AG04450 (cell line): ENCODE measurements at regions of chr11 and their contacts with region 1.

Region 1: GRCh38 chr11:61429691-61430582 is at the starts of genes CPSF7 and SDHAF2:
- DNase-seq: peak; percentile 77
- H3K4me3 ChIP-seq: peak within 1 kb of the TSS; percentile 100
- H3K27ac ChIP-seq: peak within 1 kb of the TSS; percentile 96
- H3K27me3 ChIP-seq: no peaks in the 10 kb centered on the region
- CTCF ChIP-seq: no peak
- polyA plus RNA-seq, gene CPSF7: 37.3 and 40.3 TPM in 2 replicates
- polyA plus RNA-seq, gene SDHAF2: 71.6 and 86.5 TPM in 2 replicates

Region 2: GRCh38 chr11:61309739-61310138 is 120.2 kb before region 1 on chr11:
- CTCF ChIA-PET with region 1: no interaction called
- POLR2A ChIA-PET with region 1: no interaction called
- DNase-seq: no peak
- H3K4me3 ChIP-seq: no peak overlapping the region
- H3K27ac ChIP-seq: no peak overlapping the region
- H3K27me3 ChIP-seq: no peaks in the 10 kb centered on the region
- CTCF ChIP-seq: no peak

Region 3: GRCh38 chr11:61392981-61393595 is 36.8 kb before region 1 on chr11:
- CTCF ChIA-PET with region 1: interaction called, 3 read pairs
- POLR2A ChIA-PET with region 1: interaction called, 17 read pairs
- DNase-seq: no peak
- H3K4me3 ChIP-seq: peak overlapping the region; percentile 67
- H3K27ac ChIP-seq: no peak overlapping the region
- H3K27me3 ChIP-seq: no peaks in the 10 kb centered on the region
- CTCF ChIP-seq: peak; percentile 52

Region 4: GRCh38 chr11:61401558-61401957 is 28.4 kb before region 1 on chr11:
- CTCF ChIA-PET with region 1: interaction called, 10 read pairs
- POLR2A ChIA-PET with region 1: interaction called, 4 read pairs
- DNase-seq: no peak
- H3K4me3 ChIP-seq: no peak overlapping the region
- H3K27ac ChIP-seq: no peak overlapping the region
- H3K27me3 ChIP-seq: no peaks in the 10 kb centered on the region
- CTCF ChIP-seq: no peak

Region 5: DNA sequence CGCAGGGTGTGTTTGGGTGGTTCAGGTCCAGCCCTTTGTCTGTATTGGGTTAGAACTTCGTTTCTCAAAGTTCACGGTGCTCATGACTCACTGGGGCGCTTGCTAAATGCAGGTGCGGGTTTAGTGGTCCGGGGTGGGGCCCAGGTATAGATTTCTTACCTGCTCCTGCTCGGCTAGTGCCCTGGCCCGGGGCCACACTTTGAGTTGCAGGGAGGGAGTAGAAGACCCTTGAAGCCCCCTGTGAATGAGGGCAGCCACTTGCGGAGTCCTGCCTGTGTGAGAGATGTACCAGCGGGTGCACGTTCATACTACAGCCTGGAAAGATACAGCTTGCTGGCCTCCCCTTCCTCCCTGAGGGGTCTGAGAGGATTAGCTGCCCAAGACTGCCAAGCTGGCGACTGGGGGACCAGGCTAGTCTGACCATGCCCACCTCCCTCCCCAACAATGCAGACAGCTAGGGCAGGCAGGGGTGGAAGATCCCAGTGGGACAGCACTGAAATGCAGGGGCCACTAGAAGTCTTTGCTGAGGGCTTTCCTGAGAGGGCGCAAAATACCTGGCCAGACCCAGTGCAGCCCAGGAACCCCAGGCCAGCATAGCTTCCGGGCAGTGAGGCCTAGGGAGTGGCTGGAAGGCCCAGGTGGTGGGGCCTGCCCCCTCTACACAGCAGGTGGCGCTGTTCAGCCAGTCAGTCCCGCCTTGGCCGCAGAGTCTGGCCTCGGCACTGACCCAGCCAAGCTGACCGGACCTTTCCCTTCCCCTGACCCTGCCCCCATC is 317.4 kb after region 1 on chr11:
- CTCF ChIA-PET with region 1: interaction called, 16 read pairs
- POLR2A ChIA-PET with region 1: no interaction called
- DNase-seq: no peak
- H3K4me3 ChIP-seq: no peak overlapping the region
- H3K27ac ChIP-seq: no peak overlapping the region
- H3K27me3 ChIP-seq: no peaks in the 10 kb centered on the region
- CTCF ChIP-seq: peak; percentile 93